Activated CD4-positive, alpha-beta T cell treated with anti-CD3 and anti-CD28 coated beads for 36 hours (primary cell): ENCODE measurements at regions of chr1 and their contacts with region 1.

Region 1: DNA sequence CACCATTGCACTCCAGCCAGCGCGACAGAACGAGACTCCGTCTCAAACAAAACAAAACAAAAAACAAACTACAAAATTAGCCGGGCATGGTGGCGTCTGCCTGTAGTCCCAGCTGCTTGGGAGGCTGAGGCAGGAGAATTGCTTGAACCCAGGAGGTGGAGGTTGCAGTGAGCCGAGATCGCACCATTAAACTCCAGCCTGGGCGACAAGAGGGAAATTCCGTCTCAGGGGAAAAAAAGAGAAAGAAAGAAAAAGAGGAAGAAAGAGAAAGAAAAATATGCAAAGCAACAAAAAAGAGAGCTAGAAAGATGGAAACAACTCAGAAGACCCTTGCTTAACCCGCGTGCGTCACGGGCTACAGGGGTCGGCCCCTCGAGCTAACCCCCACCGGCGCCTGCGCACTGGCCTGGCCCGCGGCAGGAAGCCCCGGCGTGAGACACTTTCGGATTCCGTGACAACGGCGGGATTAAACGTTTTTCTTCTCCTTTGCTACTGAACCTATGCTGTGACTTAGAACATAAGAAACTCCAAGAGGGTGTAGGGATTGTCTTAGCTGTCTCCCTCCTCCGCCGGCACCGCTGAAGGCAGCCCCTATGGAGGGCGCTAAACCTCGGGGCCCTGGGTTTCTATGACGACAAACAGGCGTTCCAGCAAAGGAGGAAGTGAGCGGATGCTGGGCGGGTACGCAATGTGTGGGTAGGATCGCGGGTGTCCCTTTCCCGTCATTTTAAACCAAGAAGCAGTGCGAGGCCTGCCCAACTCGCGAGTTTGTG is at the start of gene AXDND1:
- DNase-seq: peak; percentile 93
- ATAC-seq: peak; percentile 95
- H3K4me3 Mint-ChIP-seq: peak within 1 kb of the TSS; percentile 94
- H3K27ac Mint-ChIP-seq: peak within 1 kb of the TSS; percentile 100
- H3K4me1 Mint-ChIP-seq: peaks cover 19% of the 10 kb centered on the region
- H3K27me3 Mint-ChIP-seq: no peaks in the 10 kb centered on the region
- total RNA-seq, gene AXDND1: 0.37 to 0.47 TPM

Region 2: GRCh38 chr1:178725603-178726517 is 639.6 kb before region 1 on chr1:
- CTCF ChIA-PET with region 1: no interaction called
- POLR2A ChIA-PET with region 1: no interaction called
- intact Hi-C with region 1: loop called in 1 of 2 experiments (anchors 2 kb)
- DNase-seq: peak; percentile 73
- ATAC-seq: peak; percentile 73
- H3K4me3 Mint-ChIP-seq: peak overlapping the region; percentile 79
- H3K27ac Mint-ChIP-seq: peak overlapping the region; percentile 64
- H3K4me1 Mint-ChIP-seq: peaks cover 20% of the 10 kb centered on the region
- H3K27me3 Mint-ChIP-seq: no peaks in the 10 kb centered on the region

Region 3: DNA sequence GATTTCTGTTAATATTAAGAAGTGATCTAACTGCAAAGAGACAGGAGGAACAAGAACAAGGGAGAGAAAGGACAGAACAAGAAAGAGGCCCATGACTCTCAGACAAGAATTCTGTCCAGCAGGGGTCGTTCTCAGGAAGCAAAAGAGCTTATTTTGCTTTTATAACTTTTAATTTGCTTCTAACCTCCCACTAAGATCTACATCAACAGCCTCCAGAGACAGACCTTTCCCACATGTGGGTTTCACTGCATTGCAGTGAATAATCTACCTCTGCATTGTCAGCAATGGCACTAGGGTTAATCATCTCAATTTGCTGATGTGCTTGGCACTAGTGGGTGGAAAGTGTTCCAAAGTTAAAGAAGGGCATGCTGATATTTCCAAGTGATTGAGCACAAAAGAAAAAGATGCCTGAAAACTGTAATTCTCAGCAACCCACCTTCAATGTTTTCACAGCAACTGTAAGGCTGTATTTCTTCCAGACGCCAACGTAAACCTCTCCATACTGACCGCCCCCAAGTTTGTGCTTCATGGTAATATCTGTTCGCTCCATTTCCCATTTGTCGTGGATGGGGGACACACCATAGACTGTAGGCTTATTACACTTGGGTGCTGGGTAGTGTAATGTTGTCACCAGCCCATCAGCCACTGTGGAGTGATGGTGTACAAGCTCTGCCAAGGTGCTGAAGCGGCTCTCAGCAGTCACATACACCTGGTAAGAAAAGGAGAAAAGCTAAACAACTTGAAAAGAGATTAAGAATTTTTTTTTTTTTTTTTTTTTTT is 244.2 kb before region 1 on chr1:
- CTCF ChIA-PET with region 1: interaction called, 32 read pairs
- POLR2A ChIA-PET with region 1: no interaction called
- intact Hi-C with region 1: loop called (anchors 1 kb)
- DNase-seq: peak; percentile 64
- ATAC-seq: peak; percentile 69
- H3K4me3 Mint-ChIP-seq: no peak overlapping the region
- H3K27ac Mint-ChIP-seq: no peak overlapping the region
- H3K4me1 Mint-ChIP-seq: peaks cover 6% of the 10 kb centered on the region
- H3K27me3 Mint-ChIP-seq: no peaks in the 10 kb centered on the region

Region 4: DNA sequence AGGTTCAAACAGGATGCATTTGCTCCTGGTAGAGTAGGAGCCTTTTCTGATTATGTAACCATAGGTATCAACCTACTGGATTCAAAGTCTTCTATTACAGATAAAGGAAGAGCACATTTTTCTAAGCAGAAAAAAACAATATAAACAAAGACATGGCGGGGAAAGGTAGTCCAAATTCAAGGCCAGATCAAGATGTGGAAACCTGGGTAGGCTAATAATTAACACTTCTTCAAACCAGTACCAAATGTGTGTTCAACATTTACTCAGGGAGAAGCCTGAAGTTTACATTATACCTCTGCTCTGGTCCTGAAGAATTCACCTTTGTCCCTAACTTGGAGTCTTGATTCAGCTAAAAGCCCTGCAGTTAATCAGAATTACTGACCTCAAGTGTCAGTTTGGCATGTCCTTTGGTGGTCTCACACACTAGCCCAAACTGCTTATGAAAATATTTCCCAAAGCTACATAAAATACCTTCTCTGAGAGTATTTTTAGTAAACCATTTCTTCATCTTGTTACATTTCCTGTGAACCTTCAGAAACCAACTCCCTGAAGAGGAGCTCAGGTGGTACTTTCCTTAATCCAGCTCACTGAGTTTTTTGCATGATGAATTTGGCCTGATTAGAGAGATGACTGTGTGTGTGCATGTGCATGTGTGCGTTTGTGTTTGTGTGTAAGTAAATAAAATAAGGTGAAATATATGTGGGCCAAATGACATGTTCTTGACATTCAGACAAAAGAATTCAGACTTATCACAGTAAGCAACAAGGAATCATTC is 213.4 kb before region 1 on chr1:
- CTCF ChIA-PET with region 1: no interaction called
- POLR2A ChIA-PET with region 1: no interaction called
- intact Hi-C with region 1: no loop called
- DNase-seq: no peak
- ATAC-seq: no peak
- H3K4me3 Mint-ChIP-seq: no peak overlapping the region
- H3K27ac Mint-ChIP-seq: no peak overlapping the region
- H3K4me1 Mint-ChIP-seq: peaks cover 18% of the 10 kb centered on the region
- H3K27me3 Mint-ChIP-seq: no peaks in the 10 kb centered on the region

Region 5: DNA sequence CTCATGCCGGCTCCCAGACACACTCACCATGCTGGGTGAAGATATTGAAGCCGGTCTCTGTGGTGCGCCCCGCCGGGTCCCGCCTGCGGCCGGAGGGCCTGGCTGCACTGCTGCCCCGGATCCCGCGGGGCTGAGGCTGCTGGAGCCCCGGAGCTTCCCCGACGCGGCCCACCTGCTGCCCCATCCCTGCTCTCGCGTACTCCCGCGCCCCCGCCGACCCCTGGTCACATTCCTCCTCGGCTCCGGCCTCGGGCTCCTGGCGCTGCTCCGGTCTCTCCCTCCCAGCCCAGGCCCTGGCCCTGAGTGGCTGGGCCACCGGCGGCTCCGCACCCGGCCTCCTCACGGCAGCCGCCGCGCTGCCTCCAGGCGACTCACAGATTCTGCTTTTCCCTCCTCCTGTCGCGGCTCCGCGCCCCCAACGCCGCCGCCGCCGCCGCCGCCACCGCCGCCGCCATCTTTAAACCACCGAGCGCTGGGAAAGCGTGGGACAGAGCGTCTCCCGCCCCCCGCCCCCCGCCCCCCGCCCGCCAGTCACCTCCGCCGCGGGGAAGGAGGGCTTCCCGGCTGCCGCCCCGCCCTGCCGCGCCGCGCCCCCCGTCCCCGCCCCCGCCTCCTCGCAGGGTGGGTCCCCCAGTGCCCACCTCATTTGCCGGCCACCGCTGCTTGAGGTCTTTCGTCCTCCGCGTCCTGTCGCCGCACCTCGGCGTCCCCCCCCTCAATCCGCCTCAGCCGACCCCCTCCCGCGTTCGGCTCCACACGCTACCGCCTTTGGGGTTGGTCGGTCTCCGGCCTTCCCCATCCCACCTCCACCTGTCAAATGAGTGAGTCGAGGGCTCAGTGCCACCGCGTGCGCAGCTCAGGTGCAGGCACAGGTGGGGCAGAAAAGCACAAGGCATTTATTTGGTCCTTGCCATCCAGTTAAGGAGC is 136.0 kb before region 1 on chr1 and contains the start of gene ABL2:
- CTCF ChIA-PET with region 1: interaction called, 4 read pairs
- POLR2A ChIA-PET with region 1: interaction called, 3 read pairs
- intact Hi-C with region 1: loop called (anchors 1 to 5 kb)
- DNase-seq: peak; percentile 71
- ATAC-seq: peak; percentile 21
- H3K4me3 Mint-ChIP-seq: peak within 1 kb of the TSS; percentile 86
- H3K27ac Mint-ChIP-seq: peak within 1 kb of the TSS; percentile 88
- H3K4me1 Mint-ChIP-seq: peaks cover 36% of the 10 kb centered on the region
- H3K27me3 Mint-ChIP-seq: no peaks in the 10 kb centered on the region
- total RNA-seq, gene ABL2: 6.6 to 8.4 TPM

Region 6: GRCh38 chr1:179882243-179883039 is 516.9 kb after region 1 on chr1 and contains the start of gene TOR1AIP1:
- CTCF ChIA-PET with region 1: no interaction called
- POLR2A ChIA-PET with region 1: no interaction called
- intact Hi-C with region 1: loop called in 1 of 2 experiments (anchors 5 kb)
- DNase-seq: peak; percentile 98
- ATAC-seq: peak; percentile 80
- H3K4me3 Mint-ChIP-seq: peak within 1 kb of the TSS; percentile 87
- H3K27ac Mint-ChIP-seq: peak within 1 kb of the TSS; percentile 98
- H3K4me1 Mint-ChIP-seq: peaks cover 59% of the 10 kb centered on the region
- H3K27me3 Mint-ChIP-seq: no peaks in the 10 kb centered on the region
- total RNA-seq, gene TOR1AIP1: 50.1 to 71.6 TPM